Transverse colon (tissue), 4 donors: ENCODE measurements at regions of chr7 and their contacts with region 1.

Region 1: DNA sequence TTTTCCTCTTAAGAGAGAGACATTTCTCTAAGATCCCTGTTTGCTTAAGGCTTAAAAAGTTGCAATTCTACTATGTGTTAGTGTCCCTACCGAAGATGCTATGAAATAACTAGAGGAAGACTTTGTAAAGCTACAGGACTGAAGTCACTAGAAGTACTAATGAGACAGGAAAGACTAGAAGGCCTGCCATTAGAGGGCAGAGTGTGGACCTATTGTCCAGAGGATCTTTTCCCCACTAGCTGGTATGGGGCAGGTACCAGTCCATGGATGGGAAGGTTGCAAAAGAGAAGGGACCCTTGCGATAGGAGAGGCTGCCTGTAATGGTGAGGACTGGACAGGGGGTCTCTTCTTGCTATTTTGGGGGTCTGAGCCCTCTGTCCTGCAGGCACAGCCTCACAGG is 178.1 kb downstream of the TMEM178B start:
- DNase-seq: no peak
- H3K4me3 ChIP-seq: no peak overlapping the region
- H3K27ac ChIP-seq: no peak overlapping the region
- H3K4me1 ChIP-seq: no peaks in the 10 kb centered on the region
- H3K27me3 ChIP-seq: no peaks in the 10 kb centered on the region
- CTCF ChIP-seq: no peak
- EP300 ChIP-seq: no peak
- POLR2A ChIP-seq: no peak

Region 2: GRCh38 chr7:140326116-140326928 is 925.6 kb before region 1 on chr7:
- in situ Hi-C with region 1: no loop called
- intact Hi-C with region 1: no loop called
- DNase-seq: peak; percentile 84
- H3K4me3 ChIP-seq: peak overlapping the region in 1 of 4 donors; percentile 28
- H3K27ac ChIP-seq: peak overlapping the region; percentile 76 to 85 (median 78)
- H3K4me1 ChIP-seq: peaks cover 7 to 39% (median 29%) of the 10 kb centered on the region in 4 donors
- H3K27me3 ChIP-seq: no peaks in the 10 kb centered on the region
- CTCF ChIP-seq: peak; percentile 61 to 71 (median 67)
- EP300 ChIP-seq: no peak
- POLR2A ChIP-seq: no peak

Region 3: DNA sequence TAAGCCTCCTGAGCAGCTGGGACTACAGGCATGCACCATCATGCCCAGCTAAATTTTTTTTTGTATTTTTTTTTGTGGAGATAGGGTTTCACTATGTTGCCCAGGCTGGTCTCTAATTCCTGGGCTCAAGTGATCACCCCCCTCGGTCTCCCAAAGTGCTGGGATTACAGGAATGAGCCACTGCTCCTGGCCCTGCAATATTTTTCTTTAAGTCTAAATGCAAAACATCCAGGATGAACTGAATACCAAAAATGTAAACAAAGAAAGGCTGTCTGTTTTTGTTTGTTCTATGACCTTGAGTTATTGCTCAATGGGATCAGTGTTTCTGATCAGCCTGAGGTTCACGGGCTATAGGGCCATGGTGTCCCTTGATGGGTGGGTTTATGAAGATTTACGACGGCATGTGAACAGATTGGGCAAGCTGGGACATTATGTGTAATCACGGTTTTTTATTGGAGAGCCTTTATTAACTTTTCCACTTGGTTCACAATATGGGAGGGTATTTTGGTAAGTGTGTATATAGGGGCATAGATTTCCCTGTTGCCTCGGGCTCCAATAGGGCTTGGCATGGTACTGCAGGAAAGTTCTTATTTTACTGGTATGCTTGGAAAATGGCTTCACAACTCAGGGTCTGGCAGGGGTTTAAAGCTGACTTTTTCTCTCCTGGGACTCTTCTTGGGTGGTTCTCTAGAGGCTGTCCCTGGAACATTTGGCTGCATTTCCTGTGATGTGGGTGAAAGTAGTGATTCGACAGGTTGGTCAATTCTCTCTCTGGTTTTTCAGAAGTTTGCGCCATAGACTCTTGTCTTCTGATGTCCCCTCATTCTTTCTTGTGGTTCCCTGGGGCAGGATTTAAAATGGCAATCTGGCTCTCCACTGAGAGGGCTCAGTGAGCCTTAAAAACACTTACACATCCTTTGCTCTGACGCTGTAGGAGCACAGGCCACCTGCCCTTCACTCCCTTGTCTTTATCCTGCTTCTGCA is 278.8 kb before region 1 on chr7:
- in situ Hi-C with region 1: no loop called
- intact Hi-C with region 1: no loop called
- DNase-seq: no peak
- H3K4me3 ChIP-seq: no peak overlapping the region
- H3K27ac ChIP-seq: no peak overlapping the region
- H3K4me1 ChIP-seq: peaks cover 0 to 4% (median 1%) of the 10 kb centered on the region in 4 donors
- H3K27me3 ChIP-seq: no peaks in the 10 kb centered on the region
- CTCF ChIP-seq: no peak
- EP300 ChIP-seq: no peak
- POLR2A ChIP-seq: no peak

Region 4: GRCh38 chr7:141288648-141289047 is 36.7 kb after region 1 on chr7:
- in situ Hi-C with region 1: no loop called
- intact Hi-C with region 1: loop called (anchors 1 kb)
- DNase-seq: no peak
- H3K4me3 ChIP-seq: no peak overlapping the region
- H3K27ac ChIP-seq: no peak overlapping the region
- H3K4me1 ChIP-seq: no peaks in the 10 kb centered on the region
- H3K27me3 ChIP-seq: no peaks in the 10 kb centered on the region
- CTCF ChIP-seq: no peak
- EP300 ChIP-seq: no peak
- POLR2A ChIP-seq: no peak